ENCODE measurements at regions of chr17 and their contacts with region 1.

Region 1: GRCh38 chr17:17356149-17356930 is 53.2 kb downstream of the NT5M start:
- DNase-seq: peak; percentile 41 to 83 (median 68)
- ATAC-seq: peak; percentile 89
- H3K4me3 ChIP-seq: no peak overlapping the region
- H3K4me3 Mint-ChIP-seq: no peak overlapping the region
- H3K27ac ChIP-seq: no peak overlapping the region
- H3K27ac Mint-ChIP-seq: no peak overlapping the region
- H3K4me1 ChIP-seq: no peaks in the 10 kb centered on the region
- H3K4me1 Mint-ChIP-seq: peaks cover 4% of the 10 kb centered on the region
- H3K27me3 ChIP-seq: no peaks in the 10 kb centered on the region
- H3K27me3 Mint-ChIP-seq: no peaks in the 10 kb centered on the region
- CTCF ChIP-seq: peak; percentile 99

Region 2: GRCh38 chr17:17252149-17252661 is 104.1 kb before region 1 on chr17:
- CTCF ChIA-PET with region 1: no interaction called
- POLR2A ChIA-PET with region 1: no interaction called
- intact Hi-C with region 1: no loop called
- DNase-seq: no peak
- ATAC-seq: no peak
- H3K4me3 ChIP-seq: no peak overlapping the region
- H3K4me3 Mint-ChIP-seq: no peak overlapping the region
- H3K27ac ChIP-seq: no peak overlapping the region
- H3K27ac Mint-ChIP-seq: no peak overlapping the region
- H3K4me1 ChIP-seq: no peaks in the 10 kb centered on the region
- H3K4me1 Mint-ChIP-seq: no peaks in the 10 kb centered on the region
- H3K27me3 ChIP-seq: no peaks in the 10 kb centered on the region
- H3K27me3 Mint-ChIP-seq: no peaks in the 10 kb centered on the region
- CTCF ChIP-seq: no peak

Region 3: GRCh38 chr17:17391668-17392370 is 35.5 kb after region 1 on chr17:
- CTCF ChIA-PET with region 1: interaction called, 19 read pairs
- POLR2A ChIA-PET with region 1: no interaction called
- intact Hi-C with region 1: no loop called
- DNase-seq: peak; percentile 37 to 87 (median 62)
- ATAC-seq: peak; percentile 82
- H3K4me3 ChIP-seq: peak overlapping the region; percentile 47 to 49
- H3K4me3 Mint-ChIP-seq: peak overlapping the region; percentile 83
- H3K27ac ChIP-seq: peak overlapping the region; percentile 34 to 41
- H3K27ac Mint-ChIP-seq: peak overlapping the region; percentile 88
- H3K4me1 ChIP-seq: peaks cover 24% of the 10 kb centered on the region
- H3K4me1 Mint-ChIP-seq: peaks cover 25% of the 10 kb centered on the region
- H3K27me3 ChIP-seq: no peaks in the 10 kb centered on the region
- H3K27me3 Mint-ChIP-seq: peaks cover 2% of the 10 kb centered on the region
- CTCF ChIP-seq: no peak

Region 4: DNA sequence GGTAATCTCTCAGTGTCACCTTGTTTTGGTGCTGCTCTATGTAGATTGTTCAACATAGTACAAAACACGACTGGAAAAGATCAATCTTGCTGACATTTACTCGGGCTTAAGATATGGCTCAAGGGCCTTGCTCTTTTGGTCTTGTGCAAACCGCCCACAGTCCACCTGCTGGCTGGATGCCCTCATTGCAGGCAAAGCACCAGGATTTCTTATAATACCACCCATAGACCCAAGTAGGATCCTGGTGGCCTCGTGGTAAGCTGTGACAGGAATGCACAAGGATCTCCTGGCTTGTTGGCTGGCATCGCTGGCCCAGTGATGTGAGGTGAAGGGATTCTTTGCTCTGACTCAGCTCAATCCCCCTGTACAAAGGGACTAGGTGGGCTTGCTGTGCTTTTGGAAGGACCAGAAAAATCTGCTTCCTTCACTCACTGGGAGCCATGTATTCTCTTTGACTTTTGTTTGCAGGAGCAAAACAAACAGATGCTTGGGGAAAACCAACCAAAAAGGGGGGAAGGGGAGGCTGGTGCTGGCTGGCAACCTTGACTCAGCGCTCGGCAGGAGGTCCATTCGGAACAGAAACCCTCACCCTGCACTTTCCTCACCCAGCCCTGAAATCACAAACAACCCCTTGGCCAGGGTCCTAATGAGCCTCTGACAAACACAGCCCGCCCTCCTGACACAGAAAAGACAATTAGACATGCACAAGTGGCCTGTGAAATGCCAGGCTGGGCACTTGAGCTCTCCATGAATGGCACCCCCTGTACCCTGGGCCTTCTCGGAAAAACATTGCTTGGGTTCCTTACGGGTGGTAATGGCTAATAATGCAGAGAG is 83.9 kb after region 1 on chr17:
- CTCF ChIA-PET with region 1: interaction called, 43 read pairs
- POLR2A ChIA-PET with region 1: interaction called, 3 read pairs
- intact Hi-C with region 1: loop called (anchors 1 to 2 kb)
- DNase-seq: peak; percentile 59 to 89 (median 79)
- ATAC-seq: peak; percentile 87
- H3K4me3 ChIP-seq: no peak overlapping the region
- H3K4me3 Mint-ChIP-seq: no peak overlapping the region
- H3K27ac ChIP-seq: no peak overlapping the region
- H3K27ac Mint-ChIP-seq: no peak overlapping the region
- H3K4me1 ChIP-seq: peaks cover 5% of the 10 kb centered on the region
- H3K4me1 Mint-ChIP-seq: peaks cover 8% of the 10 kb centered on the region
- H3K27me3 ChIP-seq: no peaks in the 10 kb centered on the region
- H3K27me3 Mint-ChIP-seq: no peaks in the 10 kb centered on the region
- CTCF ChIP-seq: peak; percentile 87

Region 5: GRCh38 chr17:17496189-17497064 is 140.1 kb after region 1 on chr17 and contains the start of gene RASD1:
- CTCF ChIA-PET with region 1: interaction called, 30 read pairs
- POLR2A ChIA-PET with region 1: interaction called, 7 read pairs
- intact Hi-C with region 1: loop called (anchors 1 kb)
- DNase-seq: peak; percentile 62 to 88 (median 75)
- ATAC-seq: peak; percentile 85
- H3K4me3 ChIP-seq: peak within 1 kb of the TSS; percentile 51 to 76
- H3K4me3 Mint-ChIP-seq: peak within 1 kb of the TSS; percentile 84
- H3K27ac ChIP-seq: no peak within 1 kb of the TSS
- H3K27ac Mint-ChIP-seq: no peak within 1 kb of the TSS
- H3K4me1 ChIP-seq: peaks cover 13% of the 10 kb centered on the region
- H3K4me1 Mint-ChIP-seq: peaks cover 16% of the 10 kb centered on the region
- H3K27me3 ChIP-seq: peaks cover 0 to 8% of the 10 kb centered on the region in 2 experiments
- H3K27me3 Mint-ChIP-seq: peaks cover 10% of the 10 kb centered on the region
- CTCF ChIP-seq: peak; percentile 95
- total RNA-seq, gene RASD1: 2.8 to 2.9 TPM

Region 6: GRCh38 chr17:17613708-17614114 is 257.4 kb after region 1 on chr17:
- CTCF ChIA-PET with region 1: interaction called, 32 read pairs
- POLR2A ChIA-PET with region 1: no interaction called
- intact Hi-C with region 1: loop called in 1 of 2 experiments (anchors 1 kb)
- DNase-seq: peak in 8 of 9 experiments; percentile 14 to 70 (median 48)
- ATAC-seq: peak; percentile 94
- H3K4me3 ChIP-seq: no peak overlapping the region
- H3K4me3 Mint-ChIP-seq: no peak overlapping the region
- H3K27ac ChIP-seq: no peak overlapping the region
- H3K27ac Mint-ChIP-seq: no peak overlapping the region
- H3K4me1 ChIP-seq: no peaks in the 10 kb centered on the region
- H3K4me1 Mint-ChIP-seq: no peaks in the 10 kb centered on the region
- H3K27me3 ChIP-seq: no peaks in the 10 kb centered on the region
- H3K27me3 Mint-ChIP-seq: no peaks in the 10 kb centered on the region
- CTCF ChIP-seq: peak; percentile 64

Region 7: DNA sequence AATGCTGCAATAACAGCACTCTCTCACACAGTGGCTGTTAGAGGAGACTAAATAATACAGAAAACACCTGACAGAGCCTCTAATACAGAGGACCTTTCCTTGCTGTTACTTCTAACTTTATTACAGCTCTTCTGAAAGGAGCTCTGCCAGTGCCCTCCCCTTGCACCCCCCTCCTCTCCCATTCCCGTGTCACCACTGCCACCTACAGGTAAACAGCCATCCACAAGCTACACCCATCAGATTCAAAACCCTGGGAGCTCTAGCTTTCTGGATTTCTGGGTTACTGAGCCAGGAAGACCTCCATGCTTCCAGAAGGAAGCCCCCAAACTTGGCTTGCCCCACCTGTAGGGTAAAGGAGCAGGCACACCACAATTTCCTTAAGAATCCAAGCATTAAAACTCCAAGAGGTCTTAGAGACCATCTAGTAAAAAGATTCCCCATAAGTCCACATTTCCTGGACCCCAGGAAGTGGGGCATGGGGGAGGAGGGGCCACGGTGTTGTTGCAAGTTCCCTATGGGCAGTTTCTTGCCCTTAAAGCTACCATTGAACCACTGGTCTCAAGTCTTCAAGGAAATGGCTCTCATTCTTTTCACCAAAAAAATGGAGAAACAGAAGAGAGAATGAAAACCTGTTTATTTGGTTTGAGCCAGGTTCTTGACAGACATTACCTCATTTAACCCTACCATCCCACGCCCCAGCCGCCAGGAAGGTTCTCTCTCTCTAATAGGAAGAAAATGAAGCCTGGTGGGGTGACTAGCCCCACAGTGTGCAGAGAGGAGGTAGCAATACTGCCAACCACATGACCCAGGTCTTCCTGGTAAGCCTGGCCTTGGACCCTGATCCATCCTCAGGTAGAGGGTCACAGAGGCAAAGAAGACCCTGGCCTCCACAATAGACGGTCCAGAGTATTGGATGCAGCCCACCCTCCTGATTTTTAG is 563.1 kb after region 1 on chr17:
- CTCF ChIA-PET with region 1: no interaction called
- POLR2A ChIA-PET with region 1: no interaction called
- intact Hi-C with region 1: loop called in 1 of 2 experiments (anchors 1 kb)
- DNase-seq: peak; percentile 34 to 79 (median 67)
- ATAC-seq: peak; percentile 97
- H3K4me3 ChIP-seq: no peak overlapping the region
- H3K4me3 Mint-ChIP-seq: no peak overlapping the region
- H3K27ac ChIP-seq: no peak overlapping the region
- H3K27ac Mint-ChIP-seq: no peak overlapping the region
- H3K4me1 ChIP-seq: peaks cover 6% of the 10 kb centered on the region
- H3K4me1 Mint-ChIP-seq: peaks cover 13% of the 10 kb centered on the region
- H3K27me3 ChIP-seq: no peaks in the 10 kb centered on the region
- H3K27me3 Mint-ChIP-seq: no peaks in the 10 kb centered on the region
- CTCF ChIP-seq: peak; percentile 73